ENCODE measurements at regions of chr5 and their contacts with region 1.

Region 1: GRCh38 chr5:177265395-177265794 is 38.1 kb downstream of the RAB24 start:
- DNase-seq: no peak
- ATAC-seq: no peak
- H3K4me3 Mint-ChIP-seq: no peak overlapping the region
- H3K27ac Mint-ChIP-seq: no peak overlapping the region
- H3K4me1 Mint-ChIP-seq: peaks cover 3% of the 10 kb centered on the region
- H3K27me3 Mint-ChIP-seq: no peaks in the 10 kb centered on the region
- CTCF ChIP-seq: no peak

Region 2: DNA sequence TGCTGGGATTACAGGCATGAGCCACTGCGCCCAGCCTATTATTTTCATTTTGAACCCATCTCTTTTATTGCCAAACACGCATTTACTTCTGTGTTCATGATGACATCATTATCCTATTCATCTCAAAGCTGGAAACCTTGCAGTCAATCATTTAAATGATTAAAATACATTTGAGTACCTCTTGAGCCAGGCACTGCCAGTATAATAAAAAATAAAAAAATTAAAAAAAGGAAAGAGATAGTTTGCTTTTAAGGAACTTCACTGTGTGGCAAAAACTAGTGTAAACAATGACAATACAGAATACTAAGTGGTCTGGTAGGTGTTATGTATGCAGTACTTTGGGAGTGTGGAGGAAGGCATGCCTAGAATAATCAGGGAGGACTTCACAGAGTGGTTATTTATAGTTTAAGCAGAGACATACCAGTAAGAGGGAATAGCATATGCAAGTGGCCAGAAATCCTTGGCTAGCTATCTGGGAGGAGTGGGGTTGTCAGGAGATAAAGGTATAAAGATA is 123.2 kb before region 1 on chr5:
- CTCF ChIA-PET with region 1: no interaction called
- POLR2A ChIA-PET with region 1: no interaction called
- intact Hi-C with region 1: no loop called
- DNase-seq: no peak
- ATAC-seq: no peak
- H3K4me3 Mint-ChIP-seq: no peak overlapping the region
- H3K27ac Mint-ChIP-seq: no peak overlapping the region
- H3K4me1 Mint-ChIP-seq: peaks cover 37% of the 10 kb centered on the region
- H3K27me3 Mint-ChIP-seq: no peaks in the 10 kb centered on the region
- CTCF ChIP-seq: no peak

Region 3: GRCh38 chr5:177249761-177250526 is 15.5 kb before region 1 on chr5:
- CTCF ChIA-PET with region 1: interaction called, 13 read pairs
- POLR2A ChIA-PET with region 1: interaction called, 6 read pairs
- intact Hi-C with region 1: no loop called
- DNase-seq: no peak
- ATAC-seq: no peak
- H3K4me3 Mint-ChIP-seq: no peak overlapping the region
- H3K27ac Mint-ChIP-seq: no peak overlapping the region
- H3K4me1 Mint-ChIP-seq: no peaks in the 10 kb centered on the region
- H3K27me3 Mint-ChIP-seq: no peaks in the 10 kb centered on the region
- CTCF ChIP-seq: no peak

Measured in activated CD8-positive, alpha-beta T cell treated with anti-CD3 and anti-CD28 coated beads for 36 hours (primary cell).